ENCODE measurements at regions of chr11 and their contacts with region 1.

Region 1: DNA sequence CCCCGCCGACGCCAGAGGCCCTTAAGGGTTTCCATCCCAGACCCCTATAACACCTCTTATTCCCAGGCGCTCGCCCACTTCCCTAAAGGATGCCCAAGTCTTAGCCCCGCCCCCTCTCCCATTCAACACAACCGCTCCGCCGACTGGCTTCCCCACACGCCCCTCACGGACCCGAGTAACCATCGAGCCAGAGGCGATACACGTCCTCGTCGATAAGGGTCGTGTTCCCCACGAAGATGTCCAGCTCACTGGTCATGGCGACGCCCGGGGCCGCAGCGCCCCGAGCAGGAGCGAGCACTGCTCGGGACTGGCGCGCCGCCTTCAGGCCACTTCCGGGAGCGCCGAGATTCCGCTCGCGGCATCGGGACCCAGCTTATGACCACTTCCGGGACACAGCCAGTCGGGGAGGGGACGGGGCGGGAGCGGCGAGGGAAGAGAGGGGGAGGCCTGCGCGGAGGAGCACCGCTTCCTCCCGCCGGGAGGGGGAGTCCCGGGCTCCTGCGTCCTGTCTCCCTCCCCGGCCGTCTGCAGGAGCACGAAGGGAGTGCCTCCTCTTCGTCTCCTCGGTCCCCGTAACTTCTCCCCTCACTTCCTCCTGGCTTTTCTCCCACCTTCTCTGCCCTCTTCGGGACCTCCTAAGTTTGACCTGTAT is at the start of gene FIBP:
- DNase-seq: peak; percentile 98
- ATAC-seq: peak; percentile 82 to 90 (median 87)
- H3K4me3 ChIP-seq: peak within 1 kb of the TSS; percentile 48 to 98 (median 76)
- H3K27ac ChIP-seq: peak within 1 kb of the TSS; percentile 91 to 100 (median 98)
- H3K4me1 ChIP-seq: peaks cover 20 to 70% (median 57%) of the 10 kb centered on the region in 9 donors
- H3K27me3 ChIP-seq: no peaks in the 10 kb centered on the region
- CTCF ChIP-seq: peak; percentile 81 to 93 (median 88)
- total RNA-seq, gene FIBP: 46.3 to 63.2 (median 49.9) TPM

Region 2: GRCh38 chr11:65692367-65692766 is 195.9 kb before region 1 on chr11:
- intact Hi-C with region 1: no loop called
- DNase-seq: no peak
- ATAC-seq: no peak
- H3K4me3 ChIP-seq: no peak overlapping the region
- H3K27ac ChIP-seq: no peak overlapping the region
- H3K4me1 ChIP-seq: peaks cover 0 to 29% (median 12%) of the 10 kb centered on the region in 9 donors
- H3K27me3 ChIP-seq: no peaks in the 10 kb centered on the region
- CTCF ChIP-seq: no peak

Region 3: GRCh38 chr11:65711785-65712632 is 176.3 kb before region 1 on chr11 and contains the start of gene KAT5:
- intact Hi-C with region 1: loop called in 1 of 10 experiments (anchors 10 kb)
- DNase-seq: peak; percentile 98
- ATAC-seq: peak; percentile 92 to 96 (median 95)
- H3K4me3 ChIP-seq: peak within 1 kb of the TSS; percentile 39 to 82 (median 68)
- H3K27ac ChIP-seq: peak within 1 kb of the TSS; percentile 84 to 100 (median 98)
- H3K4me1 ChIP-seq: peaks cover 0 to 31% (median 21%) of the 10 kb centered on the region in 9 donors
- H3K27me3 ChIP-seq: no peaks in the 10 kb centered on the region
- CTCF ChIP-seq: peak; percentile 94 to 99 (median 98)
- total RNA-seq, gene KAT5: 40.9 to 53.6 (median 44.0) TPM

Region 4: DNA sequence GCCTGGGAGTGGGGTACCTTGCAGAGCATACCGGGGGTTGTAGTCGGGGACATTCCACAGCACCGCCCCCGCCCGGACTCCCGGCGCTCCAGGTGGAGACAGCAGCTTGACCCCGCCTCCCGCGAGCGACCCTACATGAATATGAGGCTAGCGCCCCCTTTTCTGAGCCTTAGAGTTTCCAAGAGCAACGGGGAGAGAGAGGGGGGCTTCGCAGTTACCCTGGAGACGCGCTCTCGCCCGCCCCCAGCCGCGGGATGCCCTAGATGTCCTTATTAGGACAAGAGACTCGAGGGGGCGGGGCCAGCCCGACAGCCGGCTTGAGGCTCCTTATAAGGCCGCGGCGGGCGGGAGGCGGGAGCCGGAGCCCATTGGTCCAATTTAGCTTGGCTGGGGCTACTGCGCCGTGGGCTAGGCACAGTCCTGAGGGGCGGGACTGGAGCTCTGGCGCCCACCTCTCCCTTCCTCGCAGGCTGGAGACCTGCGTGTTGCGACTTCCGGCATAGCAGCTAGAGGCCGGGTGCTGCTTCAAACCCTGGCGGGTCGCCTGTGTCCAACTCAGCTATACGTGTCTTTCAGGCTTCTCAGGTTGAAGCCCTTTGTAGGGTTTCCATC is 29.0 kb before region 1 on chr11:
- intact Hi-C with region 1: loop called in 5 of 10 experiments (anchors 1 to 2 kb)
- DNase-seq: peak; percentile 99
- ATAC-seq: peak; percentile 73 to 89 (median 84)
- H3K4me3 ChIP-seq: peak overlapping the region; percentile 37 to 100 (median 99)
- H3K27ac ChIP-seq: peak overlapping the region; percentile 90 to 100 (median 98)
- H3K4me1 ChIP-seq: peaks cover 12 to 62% (median 50%) of the 10 kb centered on the region in 9 donors
- H3K27me3 ChIP-seq: no peaks in the 10 kb centered on the region
- CTCF ChIP-seq: peak in 4 of 9 donors; percentile 17 to 36 (median 22)

Region 5: GRCh38 chr11:65873318-65874156 is 14.8 kb before region 1 on chr11:
- intact Hi-C with region 1: loop called in 2 of 10 experiments (anchors 2 kb)
- DNase-seq: peak; percentile 95 to 96
- ATAC-seq: peak; percentile 91 to 97 (median 94)
- H3K4me3 ChIP-seq: peak overlapping the region; percentile 47 to 73 (median 68)
- H3K27ac ChIP-seq: peak overlapping the region; percentile 84 to 97 (median 96)
- H3K4me1 ChIP-seq: peaks cover 16 to 40% (median 29%) of the 10 kb centered on the region in 9 donors
- H3K27me3 ChIP-seq: no peaks in the 10 kb centered on the region
- CTCF ChIP-seq: no peak

Region 6: DNA sequence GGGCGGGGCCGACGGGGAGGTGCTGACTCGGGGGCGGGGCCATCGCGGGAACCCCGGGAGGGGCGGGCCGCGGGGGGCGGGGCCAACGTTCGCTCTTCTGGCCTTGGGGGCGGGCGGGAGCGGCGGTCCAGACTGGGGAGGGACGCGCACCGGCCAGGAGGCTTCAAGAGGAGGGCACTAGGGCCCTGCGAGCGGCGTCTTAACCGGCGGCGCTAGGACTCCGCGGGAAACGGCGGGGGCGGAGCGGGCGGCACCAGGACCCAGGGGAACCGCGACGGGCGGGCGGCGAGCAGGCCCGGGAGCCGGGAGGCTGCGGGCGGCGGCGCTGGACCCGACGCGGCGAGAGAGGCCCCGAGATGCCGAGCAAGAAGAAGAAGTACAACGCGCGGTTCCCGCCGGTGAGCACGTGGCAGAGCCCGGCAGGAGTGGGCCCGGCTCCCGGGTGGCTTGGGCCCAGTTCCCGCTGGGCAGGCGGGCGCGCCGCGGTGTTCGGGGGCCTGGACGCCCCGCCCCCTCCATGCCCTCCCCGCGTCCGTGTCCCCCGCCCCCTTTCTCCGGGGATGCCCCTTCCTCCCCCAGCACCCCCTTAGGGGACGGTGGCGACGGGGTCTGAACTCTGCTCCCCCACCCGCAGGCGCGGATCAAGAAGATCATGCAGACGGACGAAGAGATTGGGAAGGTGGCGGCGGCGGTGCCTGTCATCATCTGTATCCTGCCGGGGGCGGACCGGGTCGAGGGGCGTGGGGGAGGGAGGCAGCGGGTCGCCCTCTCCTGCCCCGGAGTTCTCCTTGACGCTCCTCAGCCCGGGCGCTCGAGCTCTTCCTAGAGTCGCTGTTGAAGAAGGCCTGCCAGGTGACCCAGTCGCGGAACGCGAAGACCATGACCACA is 31.1 kb after region 1 on chr11 and contains the start of gene DRAP1:
- intact Hi-C with region 1: loop called in 5 of 10 experiments (anchors 1 to 2 kb)
- DNase-seq: peak; percentile 98 to 100
- ATAC-seq: peak; percentile 91 to 98 (median 95)
- H3K4me3 ChIP-seq: peak within 1 kb of the TSS; percentile 81 to 100 (median 98)
- H3K27ac ChIP-seq: peak within 1 kb of the TSS; percentile 95 to 99 (median 97)
- H3K4me1 ChIP-seq: peaks cover 36 to 60% (median 53%) of the 10 kb centered on the region in 9 donors
- H3K27me3 ChIP-seq: no peaks in the 10 kb centered on the region
- CTCF ChIP-seq: peak in 1 of 9 donors; percentile 19
- total RNA-seq, gene DRAP1: 69.4 to 115 (median 93.8) TPM

Region 7: DNA sequence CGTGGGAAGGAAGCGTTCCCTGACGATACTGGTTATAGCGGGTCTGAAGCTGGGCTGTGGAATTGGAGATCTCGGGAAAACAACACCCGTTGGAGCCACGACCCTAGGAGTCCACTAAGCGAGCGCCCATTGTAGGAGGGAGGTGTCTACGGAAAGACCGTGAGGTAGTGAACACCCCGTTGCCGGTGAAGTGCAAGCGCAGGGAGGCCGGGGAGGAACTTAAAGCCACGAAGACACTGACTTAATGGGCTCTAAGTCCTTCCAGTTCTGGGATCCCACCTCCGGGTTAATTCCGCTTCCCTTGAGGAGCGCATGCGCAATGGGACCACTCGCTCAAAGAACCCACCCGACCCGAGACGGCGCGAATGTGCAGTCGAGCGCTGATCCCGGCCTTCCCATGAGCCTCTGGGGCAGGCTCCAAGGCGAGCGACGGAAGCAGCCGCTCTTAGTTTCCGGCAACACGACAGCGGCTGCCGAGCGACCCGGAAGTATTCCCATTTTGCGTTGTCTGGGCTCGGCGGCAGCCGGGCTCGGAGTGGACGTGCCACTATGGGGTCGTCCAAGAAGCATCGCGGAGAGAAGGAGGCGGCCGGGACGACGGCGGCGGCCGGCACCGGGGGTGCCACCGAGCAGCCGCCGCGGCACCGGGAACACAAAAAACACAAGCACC is 73.1 kb after region 1 on chr11 and contains the start of gene SART1:
- intact Hi-C with region 1: loop called in 6 of 10 experiments (anchors 5 kb)
- DNase-seq: peak; percentile 97 to 99
- ATAC-seq: peak; percentile 97 to 99 (median 99)
- H3K4me3 ChIP-seq: peak within 1 kb of the TSS; percentile 80 to 100 (median 92)
- H3K27ac ChIP-seq: peak within 1 kb of the TSS; percentile 74 to 98 (median 92)
- H3K4me1 ChIP-seq: peaks cover 6 to 34% (median 27%) of the 10 kb centered on the region in 9 donors
- H3K27me3 ChIP-seq: no peaks in the 10 kb centered on the region
- CTCF ChIP-seq: peak in 1 of 9 donors; percentile 10
- total RNA-seq, gene SART1: 26.2 to 40.1 (median 32.5) TPM

Region 8: DNA sequence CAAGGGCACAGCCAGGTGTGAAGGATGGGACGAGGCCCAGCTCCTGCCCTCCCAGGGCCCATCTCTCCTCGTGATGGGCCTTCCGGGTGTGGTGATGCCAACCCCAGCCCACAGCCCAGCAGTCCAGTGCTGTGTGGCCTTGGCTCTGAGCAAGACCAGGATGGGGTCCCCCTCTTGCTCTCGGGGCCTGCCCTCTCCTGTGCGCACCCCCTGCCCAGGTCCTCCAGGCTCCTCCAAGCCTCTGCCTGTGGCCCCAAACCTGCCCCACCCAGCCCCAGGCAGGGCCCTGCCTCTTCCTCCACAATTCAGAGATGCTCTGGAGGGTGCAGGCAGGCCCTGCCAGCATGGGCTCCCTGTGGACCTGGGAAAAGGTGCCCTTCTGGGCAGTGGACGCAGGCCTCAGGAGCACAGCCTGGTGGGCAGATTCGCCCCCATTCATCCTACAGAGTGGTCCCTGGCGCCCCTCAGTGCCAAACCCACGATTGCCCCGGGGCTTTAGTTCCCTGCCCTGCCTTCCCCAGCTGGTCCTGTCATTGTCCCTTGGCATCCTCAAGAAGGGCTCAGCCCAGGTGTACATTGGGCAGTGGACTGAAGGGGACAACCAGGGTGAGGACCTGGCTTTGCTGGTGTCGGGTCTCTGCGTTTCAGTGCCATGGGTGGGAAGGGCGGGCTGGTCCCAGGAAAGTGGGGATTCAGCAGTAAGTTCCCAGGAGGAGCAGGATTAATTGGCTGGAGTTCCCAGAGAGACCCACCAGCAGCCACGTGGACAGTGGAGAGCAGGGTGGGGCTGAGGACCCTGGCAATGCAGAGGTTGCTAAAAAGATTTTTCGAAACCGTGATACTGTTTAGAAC is 93.9 kb after region 1 on chr11:
- intact Hi-C with region 1: loop called in 4 of 10 experiments (anchors 5 kb)
- DNase-seq: no peak
- ATAC-seq: peak in 3 of 8 donors; percentile 3 to 40 (median 18)
- H3K4me3 ChIP-seq: no peak overlapping the region
- H3K27ac ChIP-seq: no peak overlapping the region
- H3K4me1 ChIP-seq: peaks cover 0 to 6% (median 0%) of the 10 kb centered on the region in 9 donors
- H3K27me3 ChIP-seq: no peaks in the 10 kb centered on the region
- CTCF ChIP-seq: no peak

Region 9: GRCh38 chr11:66001942-66002647 is 113.8 kb after region 1 on chr11 and contains the starts of genes BANF1 and EIF1AD:
- intact Hi-C with region 1: no loop called
- DNase-seq: peak; percentile 86 to 97
- ATAC-seq: peak; percentile 89 to 96 (median 94)
- H3K4me3 ChIP-seq: peak within 1 kb of the TSS; percentile 73 to 99 (median 92)
- H3K27ac ChIP-seq: peak within 1 kb of the TSS; percentile 84 to 98 (median 95)
- H3K4me1 ChIP-seq: peaks cover 10 to 41% (median 24%) of the 10 kb centered on the region in 9 donors
- H3K27me3 ChIP-seq: no peaks in the 10 kb centered on the region
- CTCF ChIP-seq: peak in 1 of 9 donors; percentile 13
- total RNA-seq, gene BANF1: 196 to 224 (median 212) TPM
- total RNA-seq, gene EIF1AD: 15.1 to 25.3 (median 19.7) TPM

Region 10: GRCh38 chr11:66545701-66546367 is 657.5 kb after region 1 on chr11 and contains the start of gene ZDHHC24:
- intact Hi-C with region 1: no loop called
- DNase-seq: peak; percentile 97 to 98
- ATAC-seq: peak; percentile 96 to 98 (median 97)
- H3K4me3 ChIP-seq: peak within 1 kb of the TSS; percentile 67 to 98 (median 86)
- H3K27ac ChIP-seq: peak within 1 kb of the TSS in 9 of 10 donors; percentile 65 to 94 (median 73)
- H3K4me1 ChIP-seq: peaks cover 3 to 46% (median 31%) of the 10 kb centered on the region in 9 donors
- H3K27me3 ChIP-seq: no peaks in the 10 kb centered on the region
- CTCF ChIP-seq: no peak
- total RNA-seq, gene ZDHHC24: 4.6 to 8.4 (median 5.4) TPM

Region 11: DNA sequence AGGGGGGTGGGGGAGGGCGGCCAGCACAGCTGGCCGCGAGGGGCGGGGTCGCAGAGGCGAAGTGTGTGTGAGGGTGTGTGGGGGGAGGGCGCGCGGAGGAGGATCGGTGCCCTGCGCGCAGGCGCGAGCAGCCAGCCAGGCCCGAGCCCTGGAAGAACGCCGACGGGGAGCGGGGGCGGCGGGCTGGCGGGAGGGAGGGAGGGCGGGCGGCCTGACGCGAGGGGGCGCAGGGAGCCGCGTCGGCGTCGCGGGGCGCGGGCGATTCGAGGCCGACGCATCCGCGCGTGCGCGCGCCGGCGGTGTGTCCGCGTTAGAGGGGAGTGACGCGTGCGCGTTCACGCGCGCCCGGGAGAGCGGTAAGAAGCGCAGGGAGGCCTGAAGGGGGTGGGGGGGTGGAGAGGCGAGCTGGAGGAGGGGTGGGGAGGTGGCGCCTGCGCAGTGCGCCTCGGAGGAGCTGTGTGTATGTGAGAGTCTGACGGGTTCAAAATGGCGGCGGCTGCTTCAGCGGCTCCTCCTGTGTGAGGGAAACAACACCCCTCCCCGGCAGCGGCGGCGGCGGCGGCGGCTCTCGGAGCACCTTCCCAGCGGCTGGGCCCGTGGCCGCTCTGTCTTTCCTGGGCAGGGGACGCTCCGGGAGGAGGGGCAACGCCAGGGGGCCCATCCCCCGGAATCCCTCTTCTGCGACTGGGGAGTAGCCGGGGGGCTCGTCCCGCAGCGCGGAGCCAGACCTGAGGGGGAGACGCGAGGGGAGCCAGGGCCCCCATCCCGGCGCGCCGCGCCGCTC is 1230.7 kb after region 1 on chr11 and contains the start of gene KDM2A:
- intact Hi-C with region 1: no loop called
- DNase-seq: peak; percentile 99 to 100
- ATAC-seq: peak; percentile 93 to 97 (median 95)
- H3K4me3 ChIP-seq: peak within 1 kb of the TSS; percentile 85 to 98 (median 94)
- H3K27ac ChIP-seq: peak within 1 kb of the TSS; percentile 96 to 100 (median 98)
- H3K4me1 ChIP-seq: peaks cover 15 to 51% (median 26%) of the 10 kb centered on the region in 9 donors
- H3K27me3 ChIP-seq: no peaks in the 10 kb centered on the region
- CTCF ChIP-seq: peak in 7 of 9 donors; percentile 19 to 59 (median 40)
- total RNA-seq, gene KDM2A: 31.3 to 45.7 (median 37.5) TPM

Measured in heart right ventricle (tissue), 16 donors.